Endothelial cell of umbilical vein (primary cell): ENCODE measurements at regions of chr9 and their contacts with region 1.

Region 1: GRCh38 chr9:36407122-36407723 is 7.2 kb upstream of the RNF38 start:
- DNase-seq: peak; percentile 71
- H3K4me3 ChIP-seq: no peak overlapping the region
- H3K27ac ChIP-seq: no peak overlapping the region
- H3K4me1 ChIP-seq: no peaks in the 10 kb centered on the region
- H3K27me3 ChIP-seq: no peaks in the 10 kb centered on the region
- CTCF ChIP-seq: peak; percentile 85
- POLR2A ChIP-seq: no peak

Region 2: GRCh38 chr9:35526087-35526801 is 881.0 kb before region 1 on chr9:
- CTCF ChIA-PET with region 1: no interaction called
- POLR2A ChIA-PET with region 1: no interaction called
- dilution Hi-C with region 1: no loop called
- intact Hi-C with region 1: no loop called
- DNase-seq: peak; percentile 24
- H3K4me3 ChIP-seq: no peak overlapping the region
- H3K27ac ChIP-seq: no peak overlapping the region
- H3K4me1 ChIP-seq: peaks cover 11% of the 10 kb centered on the region
- H3K27me3 ChIP-seq: no peaks in the 10 kb centered on the region
- CTCF ChIP-seq: no peak
- POLR2A ChIP-seq: no peak

Region 3: GRCh38 chr9:36328798-36329411 is 78.3 kb before region 1 on chr9:
- CTCF ChIA-PET with region 1: no interaction called
- POLR2A ChIA-PET with region 1: no interaction called
- dilution Hi-C with region 1: no loop called
- intact Hi-C with region 1: no loop called
- DNase-seq: peak; percentile 78
- H3K4me3 ChIP-seq: no peak overlapping the region
- H3K27ac ChIP-seq: no peak overlapping the region
- H3K4me1 ChIP-seq: no peaks in the 10 kb centered on the region
- H3K27me3 ChIP-seq: no peaks in the 10 kb centered on the region
- CTCF ChIP-seq: peak; percentile 46 to 55
- POLR2A ChIP-seq: no peak

Region 4: DNA sequence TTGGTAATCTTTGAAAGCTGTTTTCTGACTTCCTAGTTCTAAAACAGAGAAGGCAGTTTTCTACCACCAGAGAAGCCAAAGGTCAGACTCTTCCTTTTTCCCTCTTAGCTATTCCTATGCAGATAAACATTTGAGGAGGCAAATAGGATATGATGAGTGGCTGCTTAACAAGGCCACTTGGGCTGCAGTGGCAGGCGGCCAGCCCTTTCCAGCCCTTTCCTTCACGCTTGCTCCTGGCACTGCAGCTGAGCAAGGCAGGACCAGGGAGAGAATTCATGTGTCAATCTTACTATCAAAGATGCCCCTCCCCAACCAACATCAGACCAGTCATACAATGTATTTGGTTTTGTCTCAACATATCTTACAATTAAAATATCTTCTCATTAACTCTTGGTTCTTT is 29.7 kb after region 1 on chr9:
- CTCF ChIA-PET with region 1: interaction called, 23 read pairs
- POLR2A ChIA-PET with region 1: no interaction called
- dilution Hi-C with region 1: no loop called
- intact Hi-C with region 1: no loop called
- DNase-seq: peak; percentile 40
- H3K4me3 ChIP-seq: no peak overlapping the region
- H3K27ac ChIP-seq: no peak overlapping the region
- H3K4me1 ChIP-seq: peaks cover under 1% of the 10 kb centered on the region
- H3K27me3 ChIP-seq: no peaks in the 10 kb centered on the region
- CTCF ChIP-seq: no peak
- POLR2A ChIP-seq: no peak

Region 5: DNA sequence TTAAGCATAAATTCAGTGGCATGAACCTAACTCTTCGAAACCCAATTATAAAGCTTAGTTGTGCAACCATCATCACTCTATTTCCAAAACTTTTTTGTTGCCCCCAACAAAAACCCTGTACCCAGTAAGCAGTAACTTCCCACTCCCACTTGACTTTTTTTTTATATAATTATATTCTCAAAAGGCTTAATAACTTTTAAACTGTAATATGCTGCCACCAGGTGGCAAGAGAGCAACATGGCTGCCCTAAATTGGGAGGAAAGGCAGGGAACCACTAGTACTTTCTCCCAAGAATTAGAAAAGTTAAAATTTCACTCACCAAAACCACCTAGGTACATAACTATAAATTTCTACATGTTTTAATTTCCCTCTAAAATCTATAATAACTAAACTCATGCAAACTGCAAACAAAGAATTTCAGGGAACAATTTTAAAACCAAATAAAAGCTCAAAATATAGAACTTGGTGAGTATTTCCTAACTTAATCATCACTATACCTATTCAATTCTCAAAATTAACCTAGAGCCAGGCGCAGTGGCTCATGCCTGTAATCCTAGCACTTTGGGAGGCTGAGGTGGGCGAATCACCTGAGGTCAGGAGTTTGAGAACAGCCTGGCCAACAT is 43.0 kb after region 1 on chr9:
- CTCF ChIA-PET with region 1: interaction called, 219 read pairs
- POLR2A ChIA-PET with region 1: no interaction called
- dilution Hi-C with region 1: no loop called
- intact Hi-C with region 1: loop called (anchors 1 kb)
- DNase-seq: peak; percentile 50
- H3K4me3 ChIP-seq: no peak overlapping the region
- H3K27ac ChIP-seq: no peak overlapping the region
- H3K4me1 ChIP-seq: no peaks in the 10 kb centered on the region
- H3K27me3 ChIP-seq: no peaks in the 10 kb centered on the region
- CTCF ChIP-seq: peak; percentile 51 to 58
- POLR2A ChIP-seq: no peak

Region 6: DNA sequence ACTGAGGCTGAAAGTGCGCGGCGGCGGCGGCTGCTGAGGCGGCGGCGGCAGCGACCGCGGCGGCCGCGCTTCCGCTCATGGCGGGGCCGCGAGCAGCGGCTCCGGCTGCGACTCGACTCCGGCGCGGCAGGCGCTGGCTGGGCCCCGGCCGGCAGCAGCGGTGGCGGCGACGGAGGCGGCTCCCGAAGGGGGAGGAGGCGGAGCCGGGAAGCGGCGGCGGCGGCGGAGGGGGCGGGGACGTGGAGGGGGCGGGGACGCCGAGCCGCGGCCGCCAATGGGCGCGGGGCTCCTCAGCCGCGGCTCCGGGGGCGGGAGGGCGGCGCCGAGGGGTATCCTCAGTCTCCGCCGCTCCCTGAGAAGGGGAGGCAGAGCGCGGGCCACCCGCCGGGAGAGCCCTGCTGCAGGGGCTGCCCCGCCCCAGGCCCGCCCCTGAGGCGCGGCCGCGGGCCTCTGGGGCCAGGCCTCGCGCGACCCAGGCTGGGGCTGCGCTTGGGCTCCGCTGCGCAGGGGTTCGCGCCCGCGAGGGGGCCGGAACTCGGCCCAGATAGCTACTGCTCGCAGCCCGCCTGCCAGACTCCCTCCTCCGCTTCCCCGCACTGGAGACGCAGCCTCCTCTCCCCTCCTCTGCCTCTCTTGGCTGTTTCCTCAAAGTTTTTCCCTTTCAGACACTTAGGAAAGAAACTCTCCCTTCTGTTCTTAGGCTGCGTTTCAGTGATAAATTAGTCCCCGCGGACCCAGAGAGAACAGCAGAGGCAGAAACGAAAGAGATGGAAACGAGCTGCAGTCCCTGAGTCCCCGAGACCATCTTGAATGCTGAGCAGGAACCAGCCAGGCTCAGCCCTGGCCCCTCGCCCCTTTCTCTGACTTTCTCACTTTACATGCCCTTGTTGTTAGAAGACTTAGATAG is 80.5 kb after region 1 on chr9:
- CTCF ChIA-PET with region 1: interaction called, 29 read pairs
- POLR2A ChIA-PET with region 1: no interaction called
- dilution Hi-C with region 1: no loop called
- intact Hi-C with region 1: loop called (anchors 2 kb)
- DNase-seq: peak; percentile 88
- H3K4me3 ChIP-seq: peak overlapping the region; percentile 67 to 89 (median 75)
- H3K27ac ChIP-seq: peak overlapping the region; percentile 81
- H3K4me1 ChIP-seq: peaks cover 23% of the 10 kb centered on the region
- H3K27me3 ChIP-seq: no peaks in the 10 kb centered on the region
- CTCF ChIP-seq: peak in 1 of 2 donors; percentile 6
- POLR2A ChIP-seq: peak; percentile 82

Region 7: DNA sequence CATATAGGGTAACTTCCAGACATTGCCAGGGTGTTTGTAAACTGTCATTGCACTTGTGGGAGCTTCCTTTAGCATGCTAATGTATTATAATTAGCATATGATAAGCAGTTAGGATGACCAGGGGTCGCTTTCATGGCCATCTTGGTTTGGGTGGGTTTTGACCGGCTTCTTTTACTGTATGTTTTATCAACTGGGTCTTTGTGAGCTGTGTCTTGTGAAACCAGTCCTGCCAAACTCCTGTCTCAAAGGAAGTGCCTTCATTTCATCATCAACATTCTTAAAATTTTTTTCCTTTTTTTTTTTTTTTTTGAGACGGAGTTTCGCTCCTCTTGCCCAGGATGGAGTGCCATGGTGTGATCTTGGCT is 153.6 kb after region 1 on chr9:
- CTCF ChIA-PET with region 1: interaction called, 180 read pairs
- POLR2A ChIA-PET with region 1: no interaction called
- dilution Hi-C with region 1: no loop called
- intact Hi-C with region 1: no loop called
- DNase-seq: no peak
- H3K4me3 ChIP-seq: no peak overlapping the region
- H3K27ac ChIP-seq: no peak overlapping the region
- H3K4me1 ChIP-seq: no peaks in the 10 kb centered on the region
- H3K27me3 ChIP-seq: no peaks in the 10 kb centered on the region
- CTCF ChIP-seq: no peak
- POLR2A ChIP-seq: no peak

Region 8: DNA sequence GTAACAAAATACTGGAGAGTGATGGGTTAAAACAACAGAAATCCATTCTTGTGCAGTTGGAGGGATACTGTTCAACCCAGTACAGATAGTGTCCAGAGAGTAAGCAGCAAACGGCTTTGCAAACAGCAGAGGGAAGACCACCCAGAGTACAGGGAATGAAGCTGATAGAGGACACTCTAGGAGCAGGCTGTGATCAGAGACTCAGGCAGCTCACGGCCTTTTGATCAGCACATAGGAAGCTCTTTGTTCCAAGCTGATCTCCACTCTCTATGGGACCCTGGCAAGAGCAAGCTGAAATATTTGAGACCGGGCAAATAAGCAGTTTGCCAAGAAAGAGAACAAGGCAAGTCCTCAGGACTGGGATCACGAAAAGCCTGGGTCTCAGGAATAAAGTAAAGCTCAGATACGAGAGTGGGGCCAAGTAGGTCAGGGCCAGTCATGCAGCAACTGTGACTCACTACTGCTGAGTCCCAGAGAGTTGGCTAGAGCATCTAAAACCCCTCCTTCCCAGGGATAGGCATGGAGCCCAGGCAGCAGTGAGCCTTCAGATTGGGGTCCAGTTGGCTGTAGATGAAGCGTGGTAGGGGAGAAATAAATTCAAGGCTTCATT is 217.9 kb after region 1 on chr9:
- CTCF ChIA-PET with region 1: interaction called, 10 read pairs
- POLR2A ChIA-PET with region 1: no interaction called
- dilution Hi-C with region 1: no loop called
- intact Hi-C with region 1: no loop called
- DNase-seq: peak; percentile 67
- H3K4me3 ChIP-seq: no peak overlapping the region
- H3K27ac ChIP-seq: peak overlapping the region; percentile 54
- H3K4me1 ChIP-seq: peaks cover 12% of the 10 kb centered on the region
- H3K27me3 ChIP-seq: no peaks in the 10 kb centered on the region
- CTCF ChIP-seq: no peak
- POLR2A ChIP-seq: no peak

Region 9: DNA sequence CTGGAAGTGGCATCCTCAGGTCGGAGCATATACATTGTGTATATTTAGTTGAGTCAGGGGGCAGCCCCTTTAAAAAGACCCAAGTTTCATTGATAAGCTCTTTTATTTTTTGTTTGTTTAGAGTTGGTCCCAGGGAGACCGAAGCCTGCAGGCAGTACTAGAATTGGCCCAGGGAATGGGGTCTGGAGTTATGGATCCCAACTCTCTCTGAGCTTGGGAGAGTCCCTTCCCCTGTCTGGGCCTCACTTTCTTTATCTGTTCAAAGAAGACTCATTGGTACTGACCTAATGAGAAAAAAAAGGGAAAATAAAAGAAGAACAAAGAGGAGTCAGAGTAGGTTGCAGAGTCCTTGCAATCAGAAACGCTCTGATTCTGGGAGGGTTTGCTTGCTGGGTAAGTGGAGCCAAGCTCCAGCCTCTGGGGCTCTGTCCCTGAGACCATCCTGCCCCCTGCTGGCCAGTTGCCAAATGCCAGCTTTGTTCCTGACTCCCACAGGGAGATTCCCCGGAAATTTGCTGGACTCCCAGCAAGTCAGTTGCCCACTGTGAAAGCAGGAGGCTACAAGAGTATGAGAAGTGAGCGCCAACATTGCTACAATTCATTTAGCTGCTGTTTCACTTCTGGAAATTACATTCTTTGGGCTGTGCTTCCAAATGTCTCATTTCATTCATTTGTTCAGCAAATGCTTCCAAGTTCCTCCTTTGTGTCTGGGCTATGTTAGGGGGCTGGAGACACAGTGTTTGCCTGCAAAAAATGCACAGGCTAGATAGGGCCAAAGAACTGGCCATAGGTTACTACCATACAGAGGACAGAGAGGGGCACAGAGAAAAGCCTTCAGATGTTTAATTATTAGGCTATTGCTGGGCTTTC is 321.7 kb after region 1 on chr9:
- CTCF ChIA-PET with region 1: interaction called, 49 read pairs
- POLR2A ChIA-PET with region 1: no interaction called
- dilution Hi-C with region 1: no loop called
- intact Hi-C with region 1: loop called (anchors 1 kb)
- DNase-seq: peak; percentile 85
- H3K4me3 ChIP-seq: no peak overlapping the region
- H3K27ac ChIP-seq: no peak overlapping the region
- H3K4me1 ChIP-seq: no peaks in the 10 kb centered on the region
- H3K27me3 ChIP-seq: no peaks in the 10 kb centered on the region
- CTCF ChIP-seq: peak; percentile 90 to 94
- POLR2A ChIP-seq: no peak

Region 10: GRCh38 chr9:36946653-36947052 is 539.4 kb after region 1 on chr9:
- CTCF ChIA-PET with region 1: no interaction called
- POLR2A ChIA-PET with region 1: no interaction called
- dilution Hi-C with region 1: no loop called
- intact Hi-C with region 1: no loop called
- DNase-seq: no peak
- H3K4me3 ChIP-seq: no peak overlapping the region
- H3K27ac ChIP-seq: no peak overlapping the region
- H3K4me1 ChIP-seq: no peaks in the 10 kb centered on the region
- H3K27me3 ChIP-seq: peaks cover 4 to 8% of the 10 kb centered on the region in 2 experiments
- CTCF ChIP-seq: no peak
- POLR2A ChIP-seq: no peak